ENCODE measurements at regions of chr5 and their contacts with region 1.

Region 1: DNA sequence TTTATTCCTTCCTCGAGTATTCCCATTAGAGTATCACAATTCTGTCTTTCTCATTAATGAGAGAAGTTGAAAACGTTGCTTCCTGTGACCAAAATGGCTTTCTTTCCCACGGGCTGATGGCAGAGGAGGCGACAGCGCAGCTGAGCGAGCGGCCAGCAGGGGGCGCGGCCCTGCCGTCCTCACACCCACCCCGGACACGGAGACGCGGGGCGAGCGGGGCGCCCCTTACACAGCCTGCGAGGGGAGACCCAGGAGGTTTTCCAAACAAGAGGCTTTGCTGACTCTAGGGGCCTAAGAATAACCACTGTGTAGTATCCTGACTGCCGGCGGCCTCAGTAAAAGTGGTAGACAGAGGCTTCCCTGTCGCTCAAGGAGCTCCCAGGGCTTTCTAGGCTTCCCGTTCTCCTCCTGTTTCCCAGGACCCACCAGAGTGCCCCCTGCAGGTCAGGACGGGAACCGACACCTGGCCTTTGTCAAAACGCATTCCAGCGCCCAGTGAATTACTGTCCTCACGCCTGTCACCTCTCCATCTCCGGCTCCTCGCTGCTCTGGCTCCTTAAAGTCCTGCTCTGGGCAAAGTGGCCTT is 27.3 kb upstream of the FGF1 start:
- DNase-seq: peak; percentile 78
- ATAC-seq: peak; percentile 97
- H3K4me3 Mint-ChIP-seq: peak overlapping the region; percentile 80
- H3K27ac Mint-ChIP-seq: no peak overlapping the region
- H3K4me1 Mint-ChIP-seq: peaks cover 10% of the 10 kb centered on the region
- H3K27me3 Mint-ChIP-seq: peaks cover 12% of the 10 kb centered on the region
- CTCF ChIP-seq: peak; percentile 93

Region 2: GRCh38 chr5:142356716-142357473 is 356.3 kb before region 1 on chr5:
- CTCF ChIA-PET with region 1: no interaction called
- POLR2A ChIA-PET with region 1: no interaction called
- intact Hi-C with region 1: loop called (anchors 5 kb)
- DNase-seq: peak; percentile 80
- ATAC-seq: peak; percentile 84
- H3K4me3 Mint-ChIP-seq: peak overlapping the region; percentile 83
- H3K27ac Mint-ChIP-seq: peak overlapping the region; percentile 79
- H3K4me1 Mint-ChIP-seq: peaks cover 40% of the 10 kb centered on the region
- H3K27me3 Mint-ChIP-seq: peaks cover 5% of the 10 kb centered on the region
- CTCF ChIP-seq: no peak

Region 3: GRCh38 chr5:142699184-142699720 is 14.0 kb before region 1 on chr5:
- CTCF ChIA-PET with region 1: interaction called, 16 read pairs
- POLR2A ChIA-PET with region 1: no interaction called
- intact Hi-C with region 1: no loop called
- DNase-seq: peak; percentile 33
- ATAC-seq: peak; percentile 73
- H3K4me3 Mint-ChIP-seq: no peak overlapping the region
- H3K27ac Mint-ChIP-seq: no peak overlapping the region
- H3K4me1 Mint-ChIP-seq: no peaks in the 10 kb centered on the region
- H3K27me3 Mint-ChIP-seq: peaks cover 17% of the 10 kb centered on the region
- CTCF ChIP-seq: peak; percentile 25

Region 4: DNA sequence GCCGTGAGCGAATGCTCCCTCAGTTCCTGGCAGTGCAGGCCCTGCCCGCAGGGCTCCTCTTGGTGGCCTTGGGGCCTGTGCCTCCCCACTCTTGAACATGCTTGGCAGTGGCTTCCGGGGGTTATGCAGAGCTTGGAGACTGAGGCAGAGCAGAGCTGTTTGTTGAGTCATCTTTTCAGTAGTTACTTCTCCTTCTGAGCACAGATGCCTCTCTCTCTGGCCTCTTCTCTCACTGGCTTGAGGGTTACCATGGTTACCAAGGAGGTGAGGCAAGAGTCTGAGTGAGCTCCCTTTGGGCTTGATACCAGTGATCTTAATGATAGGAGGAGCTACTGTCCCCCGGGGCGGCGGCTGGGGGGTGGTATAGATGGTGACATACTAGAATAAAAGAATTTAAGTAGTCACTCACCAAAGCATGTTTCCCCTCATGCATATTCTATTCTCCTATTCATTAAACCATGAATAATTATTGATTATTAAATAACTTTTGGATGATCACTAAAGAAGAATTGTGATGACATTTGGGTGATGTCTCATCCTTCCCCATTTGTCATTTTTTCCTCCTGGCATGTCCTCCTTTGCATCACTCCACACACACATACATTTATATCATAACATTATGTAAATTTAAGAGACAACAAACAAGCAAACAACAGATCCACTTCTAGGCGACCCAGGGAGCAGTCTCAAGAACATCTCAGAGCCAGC is 168.0 kb after region 1 on chr5:
- CTCF ChIA-PET with region 1: interaction called, 31 read pairs
- POLR2A ChIA-PET with region 1: no interaction called
- intact Hi-C with region 1: loop called (anchors 1 kb)
- DNase-seq: no peak
- ATAC-seq: peak; percentile 85
- H3K4me3 Mint-ChIP-seq: no peak overlapping the region
- H3K27ac Mint-ChIP-seq: no peak overlapping the region
- H3K4me1 Mint-ChIP-seq: peaks cover 10% of the 10 kb centered on the region
- H3K27me3 Mint-ChIP-seq: no peaks in the 10 kb centered on the region
- CTCF ChIP-seq: no peak

Region 5: DNA sequence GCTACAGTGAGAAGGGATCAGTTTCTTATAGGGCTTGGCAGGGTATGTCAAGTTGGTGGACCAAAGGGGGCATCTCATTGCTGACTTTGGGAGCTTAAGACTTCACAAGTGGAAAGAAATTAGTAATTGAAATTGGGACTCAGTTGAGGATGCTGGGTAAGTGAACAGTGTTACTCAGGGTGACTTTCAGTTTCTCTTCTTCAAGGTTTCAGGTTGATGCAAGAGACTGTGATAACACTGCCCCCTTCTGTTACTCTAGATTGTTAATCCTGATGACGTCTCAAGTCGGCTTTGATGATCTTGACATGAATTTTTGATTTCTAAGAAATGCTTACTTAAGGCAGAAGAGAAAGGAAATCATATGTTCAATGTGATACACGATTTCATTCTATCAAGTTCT is 1478.8 kb after region 1 on chr5:
- CTCF ChIA-PET with region 1: no interaction called
- POLR2A ChIA-PET with region 1: no interaction called
- intact Hi-C with region 1: loop called (anchors 2 kb)
- DNase-seq: no peak
- ATAC-seq: peak; percentile 75
- H3K4me3 Mint-ChIP-seq: no peak overlapping the region
- H3K27ac Mint-ChIP-seq: no peak overlapping the region
- H3K4me1 Mint-ChIP-seq: peaks cover 36% of the 10 kb centered on the region
- H3K27me3 Mint-ChIP-seq: no peaks in the 10 kb centered on the region
- CTCF ChIP-seq: no peak